Mammary epithelial cell (primary cell): ENCODE measurements at regions of chr12 and their contacts with region 1.

Region 1: DNA sequence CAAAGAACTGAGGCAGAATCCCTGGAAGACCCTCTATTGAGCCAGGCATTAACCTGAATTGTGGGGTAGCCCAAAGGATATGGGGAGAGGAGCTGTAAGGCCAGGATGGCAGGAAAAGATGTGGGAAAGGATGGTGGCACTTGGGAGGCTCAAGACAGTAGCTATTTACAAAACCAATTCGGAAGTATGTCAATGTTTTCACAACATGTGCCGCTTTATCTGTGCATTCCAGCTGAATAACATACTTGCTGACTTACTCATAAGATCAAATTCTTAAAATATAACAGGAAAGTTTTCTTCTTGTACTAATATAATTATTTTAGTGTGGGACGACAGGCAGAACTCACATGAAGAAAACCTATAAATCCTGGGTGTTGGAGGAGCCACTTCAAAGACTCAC is 10.6 kb downstream of the BBS10 start:
- DNase-seq: no peak
- H3K4me3 ChIP-seq: no peak overlapping the region
- H3K27ac ChIP-seq: no peak overlapping the region
- H3K4me1 ChIP-seq: peaks cover 16% of the 10 kb centered on the region
- H3K27me3 ChIP-seq: no peaks in the 10 kb centered on the region
- CTCF ChIP-seq: no peak

Region 2: DNA sequence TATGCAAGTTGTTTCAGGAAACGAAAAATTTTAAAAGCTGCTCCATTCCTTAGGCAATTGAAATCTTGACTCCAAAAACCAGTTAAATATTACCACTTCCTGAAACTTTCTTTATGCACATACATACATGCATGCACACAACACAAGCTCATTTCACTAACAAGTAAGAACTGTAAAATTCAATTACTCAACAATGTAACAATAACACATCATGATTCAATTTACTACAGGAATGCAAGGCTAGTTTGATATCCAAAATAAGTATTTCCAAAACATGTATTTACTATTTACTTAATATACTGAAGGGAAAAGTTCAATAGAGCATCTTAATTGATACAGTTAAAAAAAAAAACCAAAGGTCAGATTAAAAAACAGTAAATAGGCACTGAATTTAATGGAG is 272.7 kb before region 1 on chr12:
- CTCF ChIA-PET with region 1: no interaction called
- dilution Hi-C with region 1: loop called (anchors 10 kb)
- in situ Hi-C with region 1: loop called (anchors 10 kb)
- intact Hi-C with region 1: no loop called
- DNase-seq: no peak
- H3K4me3 ChIP-seq: no peak overlapping the region
- H3K27ac ChIP-seq: no peak overlapping the region
- H3K4me1 ChIP-seq: no peaks in the 10 kb centered on the region
- H3K27me3 ChIP-seq: no peaks in the 10 kb centered on the region
- CTCF ChIP-seq: no peak

Region 3: GRCh38 chr12:76284816-76285750 is 52.5 kb before region 1 on chr12:
- CTCF ChIA-PET with region 1: no interaction called
- dilution Hi-C with region 1: loop called (anchors 5 kb)
- in situ Hi-C with region 1: no loop called
- intact Hi-C with region 1: no loop called
- DNase-seq: no peak
- H3K4me3 ChIP-seq: no peak overlapping the region
- H3K27ac ChIP-seq: no peak overlapping the region
- H3K4me1 ChIP-seq: peaks cover 3% of the 10 kb centered on the region
- H3K27me3 ChIP-seq: no peaks in the 10 kb centered on the region
- CTCF ChIP-seq: no peak

Region 4: DNA sequence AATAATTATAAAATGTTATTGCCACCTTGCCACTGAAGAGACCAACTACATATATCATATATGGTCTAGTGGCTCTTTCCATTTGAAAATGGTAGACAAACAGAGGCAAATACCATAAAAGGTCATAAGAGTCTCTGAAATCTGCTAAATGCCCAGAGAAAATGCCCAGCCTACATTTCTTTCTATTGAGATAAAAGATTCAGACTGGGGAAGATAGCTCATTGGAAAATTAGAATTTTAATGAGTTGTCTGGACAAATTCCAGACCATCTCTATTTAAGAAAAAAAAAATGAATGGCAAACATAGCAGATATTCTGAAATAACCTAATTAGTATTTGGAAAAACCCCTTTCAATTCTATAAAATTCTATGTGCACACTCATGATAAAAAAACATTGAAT is 90.5 kb after region 1 on chr12:
- CTCF ChIA-PET with region 1: no interaction called
- dilution Hi-C with region 1: no loop called
- in situ Hi-C with region 1: no loop called
- intact Hi-C with region 1: no loop called
- DNase-seq: no peak
- H3K4me3 ChIP-seq: no peak overlapping the region
- H3K27ac ChIP-seq: no peak overlapping the region
- H3K4me1 ChIP-seq: no peaks in the 10 kb centered on the region
- H3K27me3 ChIP-seq: no peaks in the 10 kb centered on the region
- CTCF ChIP-seq: no peak